HEK293 (cell line): ENCODE measurements at regions of chr18 and their contacts with region 1.

Region 1: DNA sequence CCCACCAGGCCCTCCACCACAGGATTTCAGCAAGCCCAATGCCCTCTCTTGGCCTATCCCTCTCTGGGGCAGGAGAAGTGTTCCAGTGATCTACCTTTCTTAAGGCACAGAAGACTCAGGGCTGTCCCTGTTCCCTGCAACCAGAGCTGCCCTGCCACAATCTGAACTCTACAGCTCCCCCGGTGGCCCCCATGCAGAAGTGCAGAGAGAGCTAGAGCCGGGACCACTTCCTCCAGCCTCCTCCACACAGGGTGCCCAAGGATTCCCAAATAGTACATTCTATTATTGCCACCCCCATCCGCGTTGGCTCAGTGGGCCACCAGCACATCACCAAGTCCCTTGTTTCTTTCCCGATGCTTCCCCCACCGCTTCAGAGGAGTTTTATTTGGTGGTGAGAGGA is 114.8 kb upstream of the PTPRM start:
- H3K4me3 ChIP-seq: no peak overlapping the region
- H3K27ac ChIP-seq: no peak overlapping the region
- H3K4me1 ChIP-seq: no peaks in the 10 kb centered on the region
- CTCF ChIP-seq: peak; percentile 33; the same call in 1 of the 2 replicates

Region 2: GRCh38 chr18:7436166-7436565 is 16.2 kb before region 1 on chr18:
- CTCF ChIA-PET with region 1: interaction called, 19 read pairs
- POLR2A ChIA-PET with region 1: no interaction called
- H3K4me3 ChIP-seq: no peak overlapping the region
- H3K27ac ChIP-seq: no peak overlapping the region
- H3K4me1 ChIP-seq: peaks cover 9% of the 10 kb centered on the region
- CTCF ChIP-seq: no peak

Region 3: DNA sequence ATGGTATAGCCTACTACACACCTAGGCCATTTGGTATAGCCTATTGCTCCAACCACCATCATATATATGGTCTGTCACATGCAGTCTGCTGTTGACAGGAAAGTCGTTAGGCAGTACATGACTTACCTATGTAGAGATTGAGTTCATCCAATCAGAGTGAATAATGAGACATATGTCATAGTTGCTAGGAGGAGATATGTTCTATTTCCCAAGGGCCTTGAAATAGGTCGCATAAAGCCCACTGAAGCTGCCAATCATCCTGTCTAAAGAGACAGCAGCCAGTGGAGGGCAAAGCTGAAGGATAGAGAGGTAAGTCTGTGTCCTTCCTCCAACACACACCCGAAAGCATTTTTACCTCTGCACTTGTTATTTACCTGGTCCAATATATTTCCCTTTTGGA is 378.1 kb after region 1 on chr18:
- CTCF ChIA-PET with region 1: no interaction called
- POLR2A ChIA-PET with region 1: interaction called, 10 read pairs
- H3K4me3 ChIP-seq: no peak overlapping the region
- H3K27ac ChIP-seq: no peak overlapping the region
- H3K4me1 ChIP-seq: no peaks in the 10 kb centered on the region
- CTCF ChIP-seq: no peak